Stomach (tissue), 19 donors: ENCODE measurements at regions of chr9 and their contacts with region 1.

Region 1: DNA sequence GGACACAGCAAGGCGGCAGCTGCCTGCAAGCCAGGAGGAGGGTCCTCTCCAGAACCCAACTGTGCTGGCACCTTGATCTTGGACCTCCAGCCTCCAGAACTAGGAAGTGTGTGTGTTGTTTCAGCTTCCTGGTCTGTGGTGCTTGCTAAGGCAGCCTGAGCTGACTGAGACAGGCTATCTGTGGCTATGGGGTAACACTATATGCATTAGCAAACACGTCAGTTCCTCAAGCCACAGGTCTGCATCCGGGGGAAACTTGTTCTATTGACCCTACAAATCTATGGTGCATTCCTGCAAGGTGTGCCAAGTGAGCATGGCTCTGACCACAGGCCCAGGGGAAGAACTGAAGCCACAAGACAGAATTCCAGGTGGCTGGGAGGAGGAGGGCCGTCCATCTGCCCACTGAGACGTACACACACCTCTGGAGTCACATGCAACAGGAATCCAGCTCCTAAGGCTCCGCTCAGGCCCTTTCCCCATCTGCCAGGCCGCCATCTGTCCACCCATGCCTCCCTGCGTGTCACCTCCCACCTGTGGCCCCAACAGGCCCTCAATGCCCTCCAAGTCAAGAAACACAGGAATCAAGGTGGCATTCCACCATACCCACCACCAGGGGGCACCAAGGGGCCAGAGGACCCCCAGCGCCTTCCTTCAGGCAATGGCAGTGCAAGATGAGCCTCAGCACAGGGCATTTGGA is 174.9 kb downstream of the ROR2 start:
- DNase-seq: peak; percentile 80 to 89
- H3K4me3 ChIP-seq: no peak overlapping the region
- H3K27ac ChIP-seq: no peak overlapping the region
- H3K4me1 ChIP-seq: peaks cover 15 to 75% (median 44%) of the 10 kb centered on the region in 4 donors
- H3K27me3 ChIP-seq: no peaks in the 10 kb centered on the region
- CTCF ChIP-seq: peak in 5 of 7 experiments; percentile 55 to 89 (median 75)
- EP300 ChIP-seq: no peak
- POLR2A ChIP-seq: no peak

Region 2: DNA sequence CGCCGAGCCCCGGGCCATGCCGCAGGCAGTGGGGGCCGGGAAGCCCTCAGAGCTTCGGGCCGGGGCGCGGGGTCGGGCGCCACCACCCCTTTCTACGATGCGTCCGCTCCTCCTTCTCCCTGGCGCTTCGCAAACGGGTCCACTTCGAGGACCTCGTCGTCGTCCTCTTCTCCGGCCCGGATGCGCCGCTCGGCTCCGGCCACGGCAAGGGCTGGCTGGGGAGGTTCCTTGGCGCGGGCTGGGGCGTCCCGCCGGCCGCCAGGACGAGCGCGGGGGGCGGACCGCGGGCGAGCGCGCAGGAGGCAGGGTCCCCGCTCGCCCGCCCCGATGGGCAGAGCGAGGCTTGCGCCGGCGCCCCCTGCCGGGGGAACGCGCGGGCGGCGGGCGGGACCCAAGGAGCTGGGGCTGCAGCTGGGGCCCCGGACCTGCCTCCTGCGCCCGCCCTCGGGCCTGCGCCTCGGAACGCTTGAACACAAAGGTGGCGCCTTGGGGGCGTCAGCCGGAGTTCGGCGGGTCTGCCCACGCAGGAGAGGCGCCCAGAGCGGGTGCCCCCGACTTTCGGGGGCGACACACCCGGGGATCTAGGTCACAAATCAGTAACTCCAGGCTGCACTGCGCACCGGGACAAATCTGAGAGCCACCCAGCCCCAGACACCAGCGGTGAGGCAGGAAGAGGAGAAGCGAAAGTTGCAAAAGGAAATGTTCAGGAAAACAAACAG is 174.9 kb after region 1 on chr9 and contains the start of gene ROR2:
- intact Hi-C with region 1: loop called (anchors 10 kb)
- DNase-seq: peak; percentile 84 to 94
- H3K4me3 ChIP-seq: peak within 1 kb of the TSS; percentile 75 to 80 (median 76)
- H3K27ac ChIP-seq: peak within 1 kb of the TSS; percentile 87 to 94 (median 90)
- H3K4me1 ChIP-seq: peaks cover 26 to 73% (median 64%) of the 10 kb centered on the region in 4 donors
- H3K27me3 ChIP-seq: peaks cover 0 to 39% (median 20%) of the 10 kb centered on the region in 3 donors
- CTCF ChIP-seq: peak in 5 of 7 experiments; percentile 14 to 80 (median 48)
- EP300 ChIP-seq: no peak
- POLR2A ChIP-seq: no peak
- total RNA-seq, gene ROR2: 6.1 to 21.4 (median 15.6) TPM